Activated naive CD4-positive, alpha-beta T cell treated with anti-CD3 and anti-CD28 coated beads for 36 hours (primary cell): ENCODE measurements at regions of chr6 and their contacts with region 1.

Region 1: DNA sequence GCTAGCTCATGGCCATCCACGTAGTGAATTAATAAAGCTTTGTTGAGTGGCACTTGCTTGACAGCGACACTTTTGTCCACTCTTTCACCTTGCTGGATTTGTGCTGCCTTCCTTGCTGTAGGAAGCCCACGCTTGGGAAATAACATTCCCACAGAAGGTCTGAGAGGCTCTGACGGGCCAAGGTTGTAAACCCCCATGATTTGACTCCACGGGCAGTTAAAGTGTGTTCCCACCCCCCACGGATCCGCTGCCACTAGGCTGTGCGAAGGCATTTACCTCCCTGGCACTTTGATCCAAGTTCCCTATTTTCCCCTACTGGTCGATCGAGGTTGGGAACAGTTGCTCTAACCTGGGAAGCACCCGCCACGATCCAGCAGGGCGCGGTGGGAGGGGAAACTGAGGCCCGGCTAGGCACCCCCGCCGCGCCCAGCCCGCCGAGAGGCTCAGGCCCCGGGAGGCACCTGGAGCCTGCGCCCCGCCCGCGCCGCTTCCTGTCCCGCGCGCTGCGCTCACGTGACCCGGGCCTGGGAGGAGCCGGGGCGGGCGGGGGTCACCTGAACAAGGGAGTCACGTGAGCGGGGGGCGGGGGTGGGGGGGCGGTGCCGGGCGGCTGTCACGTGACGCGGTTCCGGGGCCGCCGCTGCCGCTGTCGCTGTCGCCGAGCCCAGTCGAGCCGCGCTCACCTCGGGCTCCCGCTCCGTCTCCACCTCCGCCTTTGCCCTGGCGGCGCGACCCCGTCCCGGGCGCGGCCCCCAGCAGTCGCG is at the start of gene IGF2R:
- DNase-seq: peak; percentile 94
- H3K4me3 Mint-ChIP-seq: peak within 1 kb of the TSS; percentile 87
- H3K27ac Mint-ChIP-seq: peak within 1 kb of the TSS; percentile 87
- H3K4me1 Mint-ChIP-seq: peaks cover 36% of the 10 kb centered on the region
- H3K27me3 Mint-ChIP-seq: no peaks in the 10 kb centered on the region
- total RNA-seq, gene IGF2R: 42.1 to 44.5 TPM

Region 2: DNA sequence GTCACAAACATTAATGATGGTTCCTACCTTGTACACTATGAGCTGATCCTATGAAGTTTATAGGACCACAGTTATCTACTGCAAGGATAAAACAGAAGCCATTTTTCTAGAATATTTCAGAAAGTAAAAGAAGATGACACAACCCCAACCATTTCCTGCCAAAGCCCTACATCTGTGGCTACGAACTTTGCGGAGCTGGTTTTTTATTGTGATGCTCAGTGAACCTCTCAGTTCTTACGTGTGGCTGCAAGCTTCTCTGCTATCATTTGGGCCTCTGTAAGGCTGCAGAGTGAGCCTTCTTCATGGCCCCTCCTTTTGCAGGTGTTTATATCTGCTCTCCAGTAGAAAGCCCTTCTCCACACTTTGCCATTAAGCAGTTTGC is 906.1 kb before region 1 on chr6:
- CTCF ChIA-PET with region 1: no interaction called
- intact Hi-C with region 1: loop called (anchors 10 kb)
- DNase-seq: peak; percentile 77
- H3K4me3 Mint-ChIP-seq: peak overlapping the region; percentile 6
- H3K27ac Mint-ChIP-seq: peak overlapping the region; percentile 91
- H3K4me1 Mint-ChIP-seq: peaks cover 95% of the 10 kb centered on the region
- H3K27me3 Mint-ChIP-seq: no peaks in the 10 kb centered on the region

Region 3: DNA sequence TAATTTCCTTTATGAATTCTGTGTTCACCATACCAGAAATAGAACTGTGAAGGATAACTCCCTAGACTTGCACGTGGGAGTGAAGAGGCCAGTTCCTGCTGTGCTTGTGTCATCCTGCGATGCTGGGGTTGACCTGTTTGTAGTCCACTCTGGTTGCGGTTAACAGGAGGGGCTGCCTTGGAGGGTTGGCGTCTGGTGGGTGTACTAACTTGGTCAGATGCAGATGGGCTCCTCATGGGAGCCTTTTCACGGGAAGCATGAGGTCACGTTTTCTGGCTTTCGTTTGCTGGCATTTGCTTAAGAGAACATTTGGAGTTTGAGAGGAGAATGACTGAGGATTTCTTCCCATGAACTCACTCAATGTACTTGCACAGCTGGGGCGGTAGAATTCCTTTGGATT is 41.4 kb after region 1 on chr6:
- CTCF ChIA-PET with region 1: no interaction called
- intact Hi-C with region 1: no loop called
- DNase-seq: no peak
- H3K4me3 Mint-ChIP-seq: no peak overlapping the region
- H3K27ac Mint-ChIP-seq: no peak overlapping the region
- H3K4me1 Mint-ChIP-seq: peaks cover 40% of the 10 kb centered on the region
- H3K27me3 Mint-ChIP-seq: no peaks in the 10 kb centered on the region

Region 4: GRCh38 chr6:160315310-160315709 is 346.7 kb after region 1 on chr6:
- CTCF ChIA-PET with region 1: no interaction called
- intact Hi-C with region 1: no loop called
- DNase-seq: no peak
- H3K4me3 Mint-ChIP-seq: no peak overlapping the region
- H3K27ac Mint-ChIP-seq: no peak overlapping the region
- H3K4me1 Mint-ChIP-seq: no peaks in the 10 kb centered on the region
- H3K27me3 Mint-ChIP-seq: peaks cover 7% of the 10 kb centered on the region